ENCODE measurements at regions of chr1 and their contacts with region 1.

Region 1: DNA sequence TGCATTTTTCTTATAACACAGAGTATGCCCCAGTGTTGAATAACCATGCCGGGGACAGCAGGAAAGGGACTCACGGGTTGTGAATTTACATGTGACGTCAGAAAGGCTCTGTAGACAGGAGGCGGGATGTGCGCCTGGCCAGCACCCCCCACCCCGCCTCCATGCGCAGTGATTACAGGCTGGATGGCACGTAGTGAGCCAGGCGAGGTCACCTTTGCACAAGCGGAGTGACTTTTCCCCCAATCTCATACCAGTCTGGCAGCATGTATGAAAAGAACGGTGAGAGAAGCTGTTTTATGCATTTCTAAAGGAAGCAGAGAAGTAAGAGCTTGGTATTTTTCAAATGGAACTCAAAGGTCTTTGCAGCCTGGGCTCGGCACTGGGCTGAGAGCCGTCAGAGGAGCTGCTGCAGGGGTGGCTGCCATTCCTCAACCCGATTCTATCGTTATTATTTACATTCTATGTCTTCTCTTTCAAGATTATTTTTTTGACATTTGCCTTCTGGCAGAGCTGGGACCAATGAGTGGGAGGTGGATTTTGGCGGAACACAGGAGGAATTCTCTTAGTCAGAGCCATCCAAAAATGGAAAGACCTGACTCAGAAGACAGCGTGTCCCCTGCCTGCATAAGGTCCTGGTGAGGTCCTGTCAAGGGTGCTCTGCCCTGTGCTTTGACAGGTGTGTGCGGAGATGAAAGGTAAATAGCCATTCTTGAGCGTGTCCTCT is 115.6 kb upstream of the SLC45A1 start:
- DNase-seq: peak; percentile 57 to 94
- H3K4me3 ChIP-seq: peak overlapping the region in 1 of 2 donors; percentile 32
- H3K27ac ChIP-seq: peak overlapping the region; percentile 97 to 99
- H3K4me1 ChIP-seq: peaks cover 17 to 52% of the 10 kb centered on the region in 2 donors
- H3K27me3 ChIP-seq: no peaks in the 10 kb centered on the region
- CTCF ChIP-seq: no peak

Region 2: GRCh38 chr1:8040586-8040985 is 161.8 kb before region 1 on chr1:
- intact Hi-C with region 1: loop called (anchors 5 kb)
- DNase-seq: peak; percentile 50 to 93
- H3K4me3 ChIP-seq: no peak overlapping the region
- H3K27ac ChIP-seq: peak overlapping the region; percentile 70 to 72
- H3K4me1 ChIP-seq: peaks cover 1 to 6% of the 10 kb centered on the region in 2 donors
- H3K27me3 ChIP-seq: no peaks in the 10 kb centered on the region
- CTCF ChIP-seq: no peak

Region 3: DNA sequence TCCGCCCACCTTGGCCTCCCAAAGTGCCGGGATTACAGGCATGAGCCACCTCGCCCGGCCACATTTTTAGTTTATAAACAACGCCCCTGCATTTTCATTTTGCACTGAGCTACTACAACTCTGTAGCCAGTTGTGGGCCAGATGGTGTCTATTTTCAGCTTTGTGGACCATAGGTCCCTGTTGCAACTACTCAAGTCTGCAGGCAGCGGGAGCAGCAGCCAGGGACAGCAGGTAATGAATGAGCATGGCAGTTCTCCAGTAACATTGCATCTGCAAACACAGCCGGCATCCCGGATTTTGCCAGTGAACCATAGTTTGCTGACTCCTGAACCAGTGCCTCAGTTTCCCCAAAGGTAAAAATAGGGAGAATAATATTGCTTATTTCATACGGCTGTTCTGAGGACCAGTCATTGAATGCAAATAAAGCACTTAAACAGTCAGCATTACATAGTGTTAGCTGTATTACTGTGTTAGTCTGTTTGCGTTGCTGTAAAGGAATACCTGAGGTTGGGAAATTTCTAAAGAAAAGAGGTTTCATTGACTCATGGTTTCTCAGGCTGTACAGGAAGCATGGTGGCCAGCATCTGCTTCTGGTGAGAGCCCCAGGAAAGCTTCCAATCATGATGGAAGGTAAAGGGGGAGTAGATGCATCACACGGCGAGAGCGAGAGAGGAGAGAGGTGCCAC is 50.1 kb after region 1 on chr1:
- intact Hi-C with region 1: no loop called
- DNase-seq: no peak
- H3K4me3 ChIP-seq: no peak overlapping the region
- H3K27ac ChIP-seq: peak overlapping the region in 1 of 2 donors; percentile 7
- H3K4me1 ChIP-seq: no peaks in the 10 kb centered on the region
- H3K27me3 ChIP-seq: no peaks in the 10 kb centered on the region
- CTCF ChIP-seq: no peak

Region 4: DNA sequence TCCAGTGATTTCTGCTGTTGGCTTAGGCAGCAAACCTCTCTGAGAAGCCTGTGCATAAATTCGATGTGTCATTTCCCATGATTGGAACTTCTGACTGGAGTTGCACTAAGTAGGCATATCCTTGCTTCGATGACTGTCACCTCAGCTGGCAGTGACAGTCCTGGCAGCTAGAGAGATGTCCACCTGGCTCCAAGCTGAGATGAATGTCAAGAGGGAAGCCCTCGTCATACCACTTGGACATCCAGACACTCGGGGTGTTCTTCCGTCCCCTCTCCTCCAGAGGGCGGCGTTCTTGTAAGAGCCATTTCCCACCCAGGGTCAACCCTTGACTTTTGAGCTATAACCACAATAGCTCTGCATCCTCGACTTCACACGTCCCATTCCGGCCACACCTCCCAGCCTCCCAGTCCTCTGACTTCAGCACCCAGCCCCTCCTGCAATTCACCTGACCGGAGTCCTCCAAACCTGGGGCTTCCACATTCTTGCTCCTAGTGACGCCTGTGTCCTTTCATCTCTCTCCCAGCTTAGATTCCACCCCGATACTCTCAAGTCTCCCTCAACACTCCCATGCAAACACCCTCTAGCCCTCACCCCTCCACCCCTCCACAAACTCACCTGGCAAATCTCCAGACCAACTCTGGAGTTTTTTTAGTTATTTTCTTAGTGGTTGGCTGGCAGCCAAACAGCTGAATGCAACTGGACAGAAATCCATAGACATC is 760.6 kb after region 1 on chr1:
- intact Hi-C with region 1: no loop called
- DNase-seq: no peak
- H3K4me3 ChIP-seq: no peak overlapping the region
- H3K27ac ChIP-seq: no peak overlapping the region
- H3K4me1 ChIP-seq: no peaks in the 10 kb centered on the region
- H3K27me3 ChIP-seq: no peaks in the 10 kb centered on the region
- CTCF ChIP-seq: peak in 1 of 3 experiments; percentile 34